ENCODE measurements at regions of chr22 and their contacts with region 1.

Region 1: GRCh38 chr22:36628571-36629065 is 74.9 kb downstream of the CACNG2 start:
- DNase-seq: no peak
- ATAC-seq: no peak
- H3K4me3 ChIP-seq: no peak overlapping the region
- H3K27ac ChIP-seq: no peak overlapping the region
- H3K4me1 ChIP-seq: no peaks in the 10 kb centered on the region
- H3K27me3 ChIP-seq: peaks cover 0 to 55% (median 5%) of the 10 kb centered on the region in 3 donors
- CTCF ChIP-seq: no peak

Region 2: DNA sequence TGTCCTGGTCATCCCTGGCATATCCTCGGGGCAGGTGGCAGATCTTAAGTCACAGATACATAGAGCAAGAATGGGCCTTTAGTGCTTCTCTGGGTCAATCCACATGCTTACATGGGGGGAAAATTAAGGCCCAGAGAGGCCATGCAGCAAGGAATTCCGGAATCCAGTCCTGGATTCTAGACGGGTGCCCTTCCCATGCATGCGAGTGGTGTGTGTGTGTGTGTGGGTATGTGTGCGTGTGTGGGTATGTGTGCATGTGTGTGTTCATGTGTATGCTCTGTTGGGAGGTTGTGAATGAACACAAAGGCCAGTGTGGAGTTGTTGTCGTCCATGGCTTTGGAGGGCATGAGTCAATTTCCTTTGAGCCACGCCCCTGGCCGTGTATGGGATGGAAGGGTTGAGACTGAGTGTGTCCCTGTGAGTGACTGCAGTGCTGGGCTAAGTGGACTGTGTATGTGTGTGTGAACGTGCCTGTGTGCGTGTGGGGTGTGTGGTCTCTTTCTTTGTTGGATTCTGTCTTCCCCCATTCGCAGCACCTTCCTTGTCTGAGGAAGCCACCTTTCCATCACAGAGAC is 66.3 kb before region 1 on chr22:
- intact Hi-C with region 1: loop called in 1 of 2 experiments (anchors 2 kb)
- DNase-seq: peak in 1 of 2 donors; percentile 41
- ATAC-seq: no peak
- H3K4me3 ChIP-seq: no peak overlapping the region
- H3K27ac ChIP-seq: no peak overlapping the region
- H3K4me1 ChIP-seq: no peaks in the 10 kb centered on the region
- H3K27me3 ChIP-seq: peaks cover 0 to 58% (median 15%) of the 10 kb centered on the region in 3 donors
- CTCF ChIP-seq: no peak

Region 3: GRCh38 chr22:36940676-36941075 is 312.1 kb after region 1 on chr22:
- intact Hi-C with region 1: no loop called
- DNase-seq: no peak
- ATAC-seq: no peak
- H3K4me3 ChIP-seq: no peak overlapping the region
- H3K27ac ChIP-seq: no peak overlapping the region
- H3K4me1 ChIP-seq: no peaks in the 10 kb centered on the region
- H3K27me3 ChIP-seq: peaks cover 0 to 16% (median 4%) of the 10 kb centered on the region in 3 donors
- CTCF ChIP-seq: no peak

Measured in psoas muscle (tissue), 8 donors.